Dendritic cell treated with granulocyte-macrophage colony-stimulating factor and Interleukin-4, amounts not matched to agents 40 ng/mL and 50 ng/mL, for 4 days (primary cell): ENCODE measurements at regions of chr19 and their contacts with region 1.

Region 1: DNA sequence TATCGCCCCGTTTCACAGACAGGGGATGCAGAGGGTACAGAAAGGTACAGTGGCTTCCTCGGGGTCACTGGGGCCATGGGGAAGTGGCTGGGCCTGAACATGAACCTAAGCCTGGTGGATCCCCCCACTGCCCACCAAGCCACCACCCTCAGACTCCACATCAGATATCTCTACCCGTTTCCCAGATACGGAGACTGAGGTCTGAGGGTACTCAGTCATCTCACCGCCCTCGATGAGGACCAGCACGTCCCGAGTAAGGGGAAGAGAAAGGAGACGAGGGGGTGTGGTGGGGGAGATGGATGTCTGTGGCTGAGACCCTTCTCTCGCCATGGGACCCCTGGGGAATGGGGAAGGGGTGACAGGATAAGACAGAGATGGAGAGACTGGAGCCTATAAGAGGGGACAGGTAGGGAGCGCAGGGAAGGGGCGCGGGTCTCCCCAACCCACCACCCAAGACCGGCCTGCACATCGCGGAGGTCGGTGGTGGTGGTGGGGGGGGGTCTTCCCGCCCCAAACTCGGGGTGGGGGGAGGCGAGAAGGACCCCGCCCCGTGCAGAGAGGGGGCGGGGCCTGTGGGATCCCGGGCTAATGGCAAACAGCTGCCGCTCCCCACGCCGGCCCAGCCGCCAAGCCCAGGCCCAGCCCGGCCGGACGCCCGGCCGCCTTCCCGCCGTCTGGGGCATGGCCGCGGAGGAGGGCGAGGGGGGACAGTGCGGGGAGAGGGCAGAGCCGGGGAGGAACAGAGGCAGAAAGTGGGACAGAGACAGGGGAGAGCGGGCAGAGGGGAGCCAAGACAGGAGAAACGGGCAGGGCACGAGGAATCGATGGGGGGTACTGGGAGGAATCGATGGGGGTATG is 710 bp downstream of the KANK2 start:
- H3K4me3 Mint-ChIP-seq: peak overlapping the region; percentile 73
- H3K27ac Mint-ChIP-seq: peak overlapping the region; percentile 53
- H3K4me1 Mint-ChIP-seq: peaks cover 27% of the 10 kb centered on the region
- H3K27me3 Mint-ChIP-seq: peaks cover 26% of the 10 kb centered on the region

Region 2: DNA sequence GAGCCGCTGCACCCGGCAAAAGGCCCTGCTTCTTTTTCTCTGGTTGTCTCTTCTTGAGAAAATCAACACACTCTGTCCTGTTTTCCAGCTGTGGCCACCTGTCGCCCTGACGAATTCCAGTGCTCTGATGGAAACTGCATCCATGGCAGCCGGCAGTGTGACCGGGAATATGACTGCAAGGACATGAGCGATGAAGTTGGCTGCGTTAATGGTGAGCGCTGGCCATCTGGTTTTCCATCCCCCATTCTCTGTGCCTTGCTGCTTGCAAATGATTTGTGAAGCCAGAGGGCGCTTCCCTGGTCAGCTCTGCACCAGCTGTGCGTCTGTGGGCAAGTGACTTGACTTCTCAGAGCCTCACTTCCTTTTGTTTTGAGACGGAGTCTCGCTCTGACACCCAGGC is 90.2 kb before region 1 on chr19:
- intact Hi-C with region 1: no loop called
- H3K4me3 Mint-ChIP-seq: no peak overlapping the region
- H3K27ac Mint-ChIP-seq: no peak overlapping the region
- H3K4me1 Mint-ChIP-seq: no peaks in the 10 kb centered on the region
- H3K27me3 Mint-ChIP-seq: no peaks in the 10 kb centered on the region

Region 3: DNA sequence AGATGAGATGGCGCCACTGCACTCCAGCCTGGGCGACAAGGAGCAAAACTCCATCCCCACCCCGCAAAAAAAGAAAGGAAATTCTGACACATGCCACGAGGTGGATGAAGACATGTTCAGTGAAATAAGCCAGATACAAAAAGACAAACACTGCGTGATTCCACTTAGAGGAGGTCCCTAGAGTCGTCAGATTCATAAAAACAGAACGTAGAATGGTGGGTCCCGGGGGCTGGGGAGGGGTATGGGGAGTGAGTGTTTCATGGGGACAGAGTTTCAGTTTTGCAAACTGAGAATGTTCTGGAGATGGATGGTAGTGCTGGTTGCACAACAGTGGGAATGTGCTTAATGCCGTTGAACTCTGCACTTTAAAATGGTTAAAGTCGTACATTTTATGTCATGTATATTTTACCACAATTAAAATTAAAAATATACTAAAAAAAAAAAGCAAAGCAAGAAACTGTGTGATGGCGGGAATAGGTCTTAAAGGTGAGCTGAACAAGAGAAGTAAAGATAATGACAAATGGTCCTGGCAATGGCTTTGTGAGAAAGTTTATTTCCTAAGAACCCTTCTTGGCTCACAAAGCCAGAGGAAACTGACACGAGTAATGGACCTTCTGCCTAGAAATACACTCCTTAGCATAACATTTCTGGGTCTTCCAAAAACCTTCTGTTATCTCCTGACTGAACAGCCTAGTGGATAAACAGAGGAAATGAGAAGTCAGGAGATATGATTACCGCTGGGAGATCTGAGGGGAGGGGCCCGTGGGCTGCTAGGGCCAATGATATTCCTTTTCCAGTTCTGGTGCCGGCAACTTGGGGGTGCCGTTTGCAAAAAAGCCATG is 36.8 kb before region 1 on chr19:
- intact Hi-C with region 1: loop called (anchors 1 kb)
- H3K4me3 Mint-ChIP-seq: no peak overlapping the region
- H3K27ac Mint-ChIP-seq: no peak overlapping the region
- H3K4me1 Mint-ChIP-seq: peaks cover 23% of the 10 kb centered on the region
- H3K27me3 Mint-ChIP-seq: no peaks in the 10 kb centered on the region

Region 4: DNA sequence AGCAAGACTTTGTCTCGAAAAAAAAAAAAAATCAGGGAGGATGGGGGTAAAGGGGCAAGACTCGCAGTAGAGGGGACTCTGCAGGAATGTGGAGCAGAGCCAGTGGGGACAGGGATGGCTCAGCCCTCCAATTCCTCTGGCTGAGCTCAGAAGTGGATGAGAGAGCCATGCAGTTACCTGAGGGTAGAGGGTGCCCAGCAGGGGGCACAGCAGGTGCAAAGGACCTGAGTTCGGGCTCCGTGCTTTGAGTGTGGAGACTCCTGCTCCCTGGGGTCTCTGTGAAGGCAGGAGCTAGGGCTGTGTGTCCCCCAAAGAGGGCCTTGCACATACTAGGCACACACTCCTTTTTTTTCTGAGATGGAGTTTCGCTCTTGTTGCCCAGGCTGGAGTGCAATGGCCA is 58.0 kb after region 1 on chr19:
- intact Hi-C with region 1: no loop called
- H3K4me3 Mint-ChIP-seq: no peak overlapping the region
- H3K27ac Mint-ChIP-seq: no peak overlapping the region
- H3K4me1 Mint-ChIP-seq: no peaks in the 10 kb centered on the region
- H3K27me3 Mint-ChIP-seq: peaks cover 40% of the 10 kb centered on the region